CD8-positive, alpha-beta memory T cell (primary cell): ENCODE measurements at regions of chr10 and their contacts with region 1.

Region 1: GRCh38 chr10:132551093-132551807 is 13.7 kb downstream of the INPP5A start:
- DNase-seq: peak in 1 of 5 donors; percentile 36
- H3K4me3 ChIP-seq: peak overlapping the region; percentile 55
- H3K4me3 Mint-ChIP-seq: peak overlapping the region; percentile 37 to 83 (median 75)
- H3K27ac ChIP-seq: peak overlapping the region; percentile 6
- H3K27ac Mint-ChIP-seq: peak overlapping the region; percentile 18 to 92 (median 78)
- H3K4me1 ChIP-seq: peaks cover 53% of the 10 kb centered on the region
- H3K4me1 Mint-ChIP-seq: peaks cover 16 to 49% (median 19%) of the 10 kb centered on the region in 3 donors
- H3K27me3 ChIP-seq: no peaks in the 10 kb centered on the region
- H3K27me3 Mint-ChIP-seq: peaks cover 0 to 5% of the 10 kb centered on the region in 2 donors

Region 2: GRCh38 chr10:132516771-132517725 is 34.2 kb before region 1 on chr10:
- CTCF ChIA-PET with region 1: no interaction called
- POLR2A ChIA-PET with region 1: no interaction called
- DNase-seq: no peak
- H3K4me3 ChIP-seq: no peak overlapping the region
- H3K4me3 Mint-ChIP-seq: no peak overlapping the region
- H3K27ac ChIP-seq: no peak overlapping the region
- H3K27ac Mint-ChIP-seq: no peak overlapping the region
- H3K4me1 ChIP-seq: no peaks in the 10 kb centered on the region
- H3K4me1 Mint-ChIP-seq: no peaks in the 10 kb centered on the region
- H3K27me3 ChIP-seq: no peaks in the 10 kb centered on the region
- H3K27me3 Mint-ChIP-seq: peaks cover 0 to 10% of the 10 kb centered on the region in 2 donors

Region 3: GRCh38 chr10:132571650-132572535 is 20.6 kb after region 1 on chr10:
- CTCF ChIA-PET with region 1: interaction called, 15 read pairs
- POLR2A ChIA-PET with region 1: interaction called, 6 read pairs
- DNase-seq: peak in 2 of 5 donors; percentile 42 to 82
- H3K4me3 ChIP-seq: no peak overlapping the region
- H3K4me3 Mint-ChIP-seq: peak overlapping the region in 5 of 7 donors; percentile 18 to 68 (median 50)
- H3K27ac ChIP-seq: peak overlapping the region; percentile 39
- H3K27ac Mint-ChIP-seq: peak overlapping the region in 7 of 8 donors; percentile 3 to 87 (median 61)
- H3K4me1 ChIP-seq: peaks cover 21% of the 10 kb centered on the region
- H3K4me1 Mint-ChIP-seq: peaks cover 9 to 28% (median 15%) of the 10 kb centered on the region in 3 donors
- H3K27me3 ChIP-seq: no peaks in the 10 kb centered on the region
- H3K27me3 Mint-ChIP-seq: no peaks in the 10 kb centered on the region